Naive thymus-derived CD4-positive, alpha-beta T cell (primary cell): ENCODE measurements at regions of chr3 and their contacts with region 1.

Region 1: DNA sequence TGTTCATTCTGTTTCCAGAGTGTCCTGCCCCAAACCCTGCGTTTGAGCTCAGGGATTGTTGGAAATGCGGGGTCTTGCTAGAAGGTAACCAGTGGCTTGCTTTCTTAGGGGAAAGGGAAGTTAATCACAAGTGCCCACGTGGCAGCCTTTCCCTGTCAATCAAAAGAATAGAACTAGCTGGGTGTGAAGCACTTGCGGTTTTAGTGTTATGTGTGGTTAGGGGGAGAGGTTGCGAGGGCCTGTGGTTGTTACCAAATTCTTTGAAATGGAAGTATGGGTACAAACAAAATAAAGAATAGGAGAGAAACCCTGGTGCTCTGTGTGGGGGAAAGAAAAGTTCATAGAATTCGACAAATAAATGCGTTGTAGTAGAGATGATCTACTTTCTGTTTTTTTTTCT is 67.6 kb downstream of the FNDC3B start:
- DNase-seq: peak in 8 of 9 donors; percentile 57 to 89 (median 84)
- ATAC-seq: peak; percentile 80
- H3K4me3 ChIP-seq: peak overlapping the region; percentile 45
- H3K4me3 Mint-ChIP-seq: peak overlapping the region; percentile 78 to 89 (median 84)
- H3K27ac ChIP-seq: peak overlapping the region; percentile 54
- H3K27ac Mint-ChIP-seq: peak overlapping the region; percentile 88 to 94 (median 91)
- H3K4me1 ChIP-seq: peaks cover 44 to 73% of the 10 kb centered on the region in 2 donors
- H3K4me1 Mint-ChIP-seq: peaks cover 65 to 91% (median 82%) of the 10 kb centered on the region in 7 donors
- H3K27me3 ChIP-seq: no peaks in the 10 kb centered on the region
- H3K27me3 Mint-ChIP-seq: peaks cover 0 to 8% (median 0%) of the 10 kb centered on the region in 5 donors

Region 2: DNA sequence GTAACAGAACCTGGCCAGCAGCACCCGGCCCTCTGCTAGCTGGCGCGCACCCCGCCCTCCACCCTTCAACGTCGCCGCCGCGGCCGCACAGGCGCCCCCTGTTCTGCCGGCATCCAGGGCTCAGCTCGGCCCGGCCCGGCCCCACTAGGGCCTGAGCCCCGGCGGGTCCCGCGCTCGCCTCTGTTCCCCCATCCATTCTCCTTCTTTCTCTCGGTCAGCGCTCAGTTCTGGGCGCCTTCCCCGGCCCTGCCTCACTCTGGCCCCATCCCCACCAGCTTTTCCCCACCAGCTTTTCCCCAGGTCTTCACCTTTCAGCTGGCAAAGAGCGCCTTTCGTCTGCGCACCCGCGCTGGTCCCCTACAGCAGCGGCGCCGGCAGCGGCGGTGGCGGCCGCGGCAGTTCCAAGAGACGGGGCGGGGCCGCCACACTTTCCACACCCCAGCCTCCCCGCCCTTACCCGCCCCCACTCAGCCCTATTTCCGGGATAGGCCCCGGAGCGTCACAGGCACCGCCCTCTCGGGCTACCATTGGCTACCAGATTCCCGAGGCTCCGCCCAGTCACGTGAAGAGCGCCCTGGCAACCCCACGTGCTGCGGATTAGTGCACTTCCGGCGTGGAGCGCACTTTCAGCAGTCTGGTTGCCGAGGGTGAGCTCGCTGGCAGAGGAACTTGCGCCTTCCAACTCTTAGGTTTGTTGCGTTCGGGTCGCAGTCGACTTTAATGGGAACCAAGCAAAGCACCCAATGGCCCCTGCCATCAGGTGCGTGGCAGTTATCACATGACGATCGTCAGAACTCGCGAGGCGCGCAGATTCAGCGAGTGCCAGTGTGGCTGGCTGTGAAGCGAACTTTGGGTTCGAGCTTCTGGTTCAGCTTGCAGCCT is 1198.5 kb before region 1 on chr3 and contains the start of gene EIF5A2:
- CTCF ChIA-PET with region 1: no interaction called
- POLR2A ChIA-PET with region 1: no interaction called
- intact Hi-C with region 1: loop called in 1 of 2 experiments (anchors 1 kb)
- DNase-seq: peak; percentile 87 to 97 (median 94)
- ATAC-seq: peak; percentile 98
- H3K4me3 ChIP-seq: peak within 1 kb of the TSS; percentile 50
- H3K4me3 Mint-ChIP-seq: peak within 1 kb of the TSS; percentile 90 to 98 (median 96)
- H3K27ac ChIP-seq: peak within 1 kb of the TSS; percentile 68
- H3K27ac Mint-ChIP-seq: peak within 1 kb of the TSS; percentile 89 to 96 (median 94)
- H3K4me1 ChIP-seq: peaks cover 15 to 16% of the 10 kb centered on the region in 2 donors
- H3K4me1 Mint-ChIP-seq: peaks cover 0 to 31% (median 22%) of the 10 kb centered on the region in 7 donors
- H3K27me3 ChIP-seq: no peaks in the 10 kb centered on the region
- H3K27me3 Mint-ChIP-seq: peaks cover 0 to 19% (median 0%) of the 10 kb centered on the region in 5 donors
- total RNA-seq, gene EIF5A2: 5.5 to 9.8 (median 7.4) TPM

Region 3: DNA sequence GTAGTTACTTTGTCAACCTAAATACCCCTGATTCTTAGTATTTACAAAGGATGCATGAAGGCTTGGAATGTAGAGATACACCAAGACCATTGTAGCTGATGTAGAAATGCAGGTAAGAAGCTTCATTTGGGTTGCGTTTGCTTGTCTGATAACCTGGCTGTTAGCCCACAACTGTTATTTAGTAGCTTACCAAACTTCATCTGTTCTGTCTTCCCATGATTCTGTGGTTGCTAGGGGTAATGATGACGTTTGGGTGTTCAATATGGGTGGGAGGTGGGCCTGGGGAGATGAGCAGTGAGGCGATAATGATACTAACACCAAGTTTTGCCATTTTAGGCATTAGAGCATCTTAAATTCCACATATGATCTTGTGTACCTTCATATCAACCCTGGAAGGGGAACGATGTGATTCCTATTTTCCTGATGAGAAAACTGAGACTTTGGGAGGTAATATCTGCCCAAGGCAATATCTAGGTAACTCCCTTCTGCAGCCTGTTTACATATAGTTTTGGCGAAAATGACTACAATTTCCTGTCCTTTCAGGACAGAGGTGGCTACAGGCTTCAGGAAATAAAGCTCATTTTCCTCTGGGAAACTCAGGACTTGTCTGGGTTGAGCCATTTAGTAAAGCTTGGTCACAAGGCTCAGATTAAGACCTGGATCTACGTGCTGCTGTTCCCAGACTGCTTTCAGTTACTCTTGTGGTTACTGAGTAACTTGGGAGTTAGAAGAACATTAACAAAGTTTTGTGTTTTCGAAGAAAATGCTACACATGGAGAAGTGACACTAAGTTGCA is 40.8 kb before region 1 on chr3:
- CTCF ChIA-PET with region 1: no interaction called
- POLR2A ChIA-PET with region 1: no interaction called
- intact Hi-C with region 1: loop called in 1 of 2 experiments (anchors 1 kb)
- DNase-seq: no peak
- ATAC-seq: no peak
- H3K4me3 ChIP-seq: no peak overlapping the region
- H3K4me3 Mint-ChIP-seq: peak overlapping the region in 3 of 10 donors; percentile 8 to 80 (median 63)
- H3K27ac ChIP-seq: no peak overlapping the region
- H3K27ac Mint-ChIP-seq: peak overlapping the region in 1 of 9 donors; percentile 5
- H3K4me1 ChIP-seq: peaks cover 0 to 17% of the 10 kb centered on the region in 2 donors
- H3K4me1 Mint-ChIP-seq: peaks cover 28 to 64% (median 51%) of the 10 kb centered on the region in 7 donors
- H3K27me3 ChIP-seq: no peaks in the 10 kb centered on the region
- H3K27me3 Mint-ChIP-seq: no peaks in the 10 kb centered on the region

Region 4: GRCh38 chr3:172094621-172095557 is 12.1 kb before region 1 on chr3:
- CTCF ChIA-PET with region 1: interaction called, 3 read pairs
- POLR2A ChIA-PET with region 1: interaction called, 4 read pairs
- intact Hi-C with region 1: loop called in 1 of 2 experiments (anchors 1 kb)
- DNase-seq: no peak
- ATAC-seq: peak; percentile 58
- H3K4me3 ChIP-seq: no peak overlapping the region
- H3K4me3 Mint-ChIP-seq: peak overlapping the region in 2 of 10 donors; percentile 4 to 45
- H3K27ac ChIP-seq: no peak overlapping the region
- H3K27ac Mint-ChIP-seq: peak overlapping the region in 3 of 9 donors; percentile 21 to 70 (median 56)
- H3K4me1 ChIP-seq: peaks cover 0 to 28% of the 10 kb centered on the region in 2 donors
- H3K4me1 Mint-ChIP-seq: peaks cover 35 to 81% (median 64%) of the 10 kb centered on the region in 7 donors
- H3K27me3 ChIP-seq: no peaks in the 10 kb centered on the region
- H3K27me3 Mint-ChIP-seq: no peaks in the 10 kb centered on the region

Region 5: DNA sequence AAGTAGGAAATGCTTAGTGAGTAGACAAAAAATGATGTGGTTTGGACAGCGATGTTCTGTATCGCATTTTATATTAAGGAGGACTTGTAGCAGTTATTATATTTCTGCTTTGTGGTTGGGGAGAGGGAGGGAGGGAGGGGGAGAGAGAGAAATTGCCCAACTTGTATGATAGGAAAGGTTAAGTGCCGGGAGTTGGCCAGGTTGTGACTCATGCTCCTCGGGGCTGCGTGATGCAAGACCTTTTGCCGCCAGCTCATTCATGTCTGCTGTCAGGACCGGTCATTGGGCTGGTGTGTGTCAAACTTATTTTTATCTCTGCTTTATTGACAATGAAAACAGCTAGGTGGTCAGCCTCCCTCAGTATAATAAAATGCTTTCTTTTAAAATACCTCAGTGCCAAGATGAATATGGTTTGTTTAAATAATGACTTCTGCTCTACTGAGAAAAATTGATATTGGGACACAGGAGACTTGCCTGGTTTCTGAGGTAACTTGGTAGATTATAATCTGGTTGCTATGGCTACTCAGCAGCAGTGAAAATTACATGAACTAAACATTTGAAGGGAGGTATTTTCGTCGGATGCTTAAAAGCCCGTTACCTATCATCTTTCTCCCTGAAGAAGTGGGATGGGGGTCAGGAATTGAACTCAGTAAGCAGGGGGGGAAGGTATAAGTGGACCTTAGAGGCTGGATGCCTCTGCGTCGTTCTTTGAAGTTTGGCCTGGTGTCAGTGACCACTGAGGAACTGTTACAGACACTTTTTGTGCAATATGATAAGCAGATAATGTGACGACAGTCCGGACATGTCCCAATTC is 23.1 kb after region 1 on chr3:
- CTCF ChIA-PET with region 1: no interaction called
- POLR2A ChIA-PET with region 1: no interaction called
- intact Hi-C with region 1: loop called (anchors 1 kb)
- DNase-seq: peak in 4 of 9 donors; percentile 10 to 34 (median 18)
- ATAC-seq: peak; percentile 80
- H3K4me3 ChIP-seq: no peak overlapping the region
- H3K4me3 Mint-ChIP-seq: peak overlapping the region in 4 of 10 donors; percentile 4 to 50 (median 34)
- H3K27ac ChIP-seq: no peak overlapping the region
- H3K27ac Mint-ChIP-seq: peak overlapping the region in 6 of 9 donors; percentile 11 to 84 (median 60)
- H3K4me1 ChIP-seq: peaks cover 0 to 30% of the 10 kb centered on the region in 2 donors
- H3K4me1 Mint-ChIP-seq: peaks cover 26 to 65% (median 51%) of the 10 kb centered on the region in 7 donors
- H3K27me3 ChIP-seq: no peaks in the 10 kb centered on the region
- H3K27me3 Mint-ChIP-seq: no peaks in the 10 kb centered on the region

Region 6: GRCh38 chr3:172511783-172512762 is 405.1 kb after region 1 on chr3:
- CTCF ChIA-PET with region 1: no interaction called
- POLR2A ChIA-PET with region 1: no interaction called
- intact Hi-C with region 1: loop called (anchors 2 kb)
- DNase-seq: peak in 7 of 9 donors; percentile 28 to 76 (median 48)
- ATAC-seq: peak; percentile 87
- H3K4me3 ChIP-seq: peak overlapping the region; percentile 2
- H3K4me3 Mint-ChIP-seq: peak overlapping the region; percentile 62 to 93 (median 80)
- H3K27ac ChIP-seq: peak overlapping the region; percentile 61
- H3K27ac Mint-ChIP-seq: peak overlapping the region; percentile 88 to 100 (median 93)
- H3K4me1 ChIP-seq: peaks cover 52 to 56% of the 10 kb centered on the region in 2 donors
- H3K4me1 Mint-ChIP-seq: peaks cover 65 to 91% (median 84%) of the 10 kb centered on the region in 7 donors
- H3K27me3 ChIP-seq: no peaks in the 10 kb centered on the region
- H3K27me3 Mint-ChIP-seq: no peaks in the 10 kb centered on the region

Region 7: GRCh38 chr3:172750368-172751174 is 643.6 kb after region 1 on chr3 and contains the start of gene ECT2:
- CTCF ChIA-PET with region 1: no interaction called
- POLR2A ChIA-PET with region 1: no interaction called
- intact Hi-C with region 1: loop called (anchors 5 kb)
- DNase-seq: peak; percentile 87 to 98 (median 94)
- ATAC-seq: peak; percentile 98
- H3K4me3 ChIP-seq: peak within 1 kb of the TSS; percentile 88
- H3K4me3 Mint-ChIP-seq: peak within 1 kb of the TSS; percentile 88 to 100 (median 96)
- H3K27ac ChIP-seq: peak within 1 kb of the TSS; percentile 63
- H3K27ac Mint-ChIP-seq: peak within 1 kb of the TSS; percentile 52 to 98 (median 85)
- H3K4me1 ChIP-seq: peaks cover 5% of the 10 kb centered on the region in 2 donors
- H3K4me1 Mint-ChIP-seq: peaks cover 6 to 45% (median 15%) of the 10 kb centered on the region in 7 donors
- H3K27me3 ChIP-seq: no peaks in the 10 kb centered on the region
- H3K27me3 Mint-ChIP-seq: peaks cover 0 to 8% (median 0%) of the 10 kb centered on the region in 5 donors
- total RNA-seq, gene ECT2: 1.3 to 41.2 (median 2.1) TPM